ENCODE measurements at regions of chr7 and their contacts with region 1.

Region 1: DNA sequence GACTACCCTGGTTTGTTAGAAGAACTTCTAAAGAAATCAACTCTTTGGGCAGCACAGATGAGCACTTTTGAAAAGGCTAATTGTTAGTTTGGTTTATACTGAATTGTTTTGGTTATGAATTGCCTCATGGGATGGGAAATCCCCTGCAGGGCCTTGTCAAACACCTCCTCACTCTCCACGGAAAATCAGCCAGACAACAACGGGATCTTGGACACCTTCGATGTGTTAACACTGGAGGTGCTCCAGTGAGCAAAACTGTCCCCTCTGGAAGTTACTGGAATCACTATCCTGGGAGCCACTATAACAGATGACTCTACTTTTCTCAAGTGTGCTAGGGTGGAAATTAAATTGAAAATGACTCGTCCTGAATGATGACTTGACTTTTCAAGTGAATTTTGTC is 38.7 kb downstream of the CDK6 start:
- DNase-seq: no peak
- ATAC-seq: peak; percentile 55
- H3K4me3 ChIP-seq: 0 out of 2 replicates have a peak overlapping the region, but pooled peaks have one; percentile 3
- H3K27ac ChIP-seq: peak overlapping the region; percentile 45; the same call in 1 of the 2 replicates
- H3K4me1 ChIP-seq: peaks cover 22% of the 10 kb centered on the region
- H3K27me3 ChIP-seq: no peaks in the 10 kb centered on the region
- CTCF ChIP-seq: no peak
- EP300 ChIP-seq: no peak
- POLR2A ChIP-seq: no peak
- RAD21 ChIP-seq: no peak

Region 2: GRCh38 chr7:92778972-92779371 is 18.7 kb before region 1 on chr7:
- CTCF ChIA-PET with region 1: interaction called, 14 read pairs
- POLR2A ChIA-PET with region 1: interaction called, 9 read pairs
- RAD21 ChIA-PET with region 1: interaction called, 5 read pairs
- SMC1A ChIA-PET with region 1: interaction called, 34 read pairs
- in situ Hi-C with region 1: no loop called
- intact Hi-C with region 1: loop called (anchors 2 kb)
- DNase-seq: peak; percentile 34
- ATAC-seq: peak; percentile 88
- H3K4me3 ChIP-seq: no peak overlapping the region
- H3K27ac ChIP-seq: peak overlapping the region; percentile 53; the same call in 1 of the 2 replicates
- H3K4me1 ChIP-seq: peaks cover 15% of the 10 kb centered on the region
- H3K27me3 ChIP-seq: no peaks in the 10 kb centered on the region
- CTCF ChIP-seq: no peak
- EP300 ChIP-seq: no peak
- POLR2A ChIP-seq: no peak
- RAD21 ChIP-seq: peak; percentile 37; the same call in 1 of the 2 replicates

Measured in GM12878 (cell line).